Esophagus muscularis mucosa (tissue), 4 donors: ENCODE measurements at regions of chr4 and their contacts with region 1.

Region 1: DNA sequence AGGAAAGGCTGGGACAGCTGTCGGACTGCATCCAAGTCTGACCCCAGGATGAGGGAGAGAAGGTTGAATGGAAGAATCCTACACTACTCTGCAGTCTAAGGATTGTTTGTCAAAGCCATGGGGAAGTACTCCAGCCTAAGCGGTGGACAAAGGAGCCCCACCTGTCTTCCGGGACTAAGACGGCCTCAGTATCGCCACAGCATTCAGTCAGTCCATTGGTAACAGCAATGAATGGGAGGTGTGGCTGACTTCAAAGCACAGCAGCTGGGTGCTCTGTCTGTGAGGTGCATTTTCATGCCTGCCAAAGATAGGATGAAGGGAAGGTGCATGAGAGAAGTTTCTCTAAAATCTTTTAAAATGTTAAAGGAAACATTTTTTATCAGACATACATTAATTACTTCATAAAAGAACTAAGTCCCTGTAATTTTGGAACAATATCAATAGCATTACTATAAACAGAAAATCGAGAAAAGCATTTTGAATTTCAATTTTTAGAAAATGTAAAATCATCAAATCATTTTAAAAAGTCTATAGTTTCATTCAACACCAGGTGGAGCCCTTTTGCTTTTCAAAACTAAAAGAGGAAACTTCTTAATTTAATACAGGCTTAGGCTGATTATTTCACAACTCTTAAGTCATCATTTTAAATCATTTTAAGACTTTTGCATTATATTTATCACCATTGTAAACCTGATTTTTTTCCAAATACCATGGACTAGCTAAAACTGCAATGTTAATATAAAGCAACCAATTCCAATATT is 27.6 kb upstream of the INTU start:
- DNase-seq: no peak
- H3K4me3 ChIP-seq: no peak overlapping the region
- H3K27ac ChIP-seq: no peak overlapping the region
- H3K4me1 ChIP-seq: no peaks in the 10 kb centered on the region
- H3K27me3 ChIP-seq: peaks cover 0 to 5% (median 0%) of the 10 kb centered on the region in 4 donors
- CTCF ChIP-seq: peak; percentile 44 to 62 (median 61)
- EP300 ChIP-seq: no peak
- POLR2A ChIP-seq: no peak

Region 2: DNA sequence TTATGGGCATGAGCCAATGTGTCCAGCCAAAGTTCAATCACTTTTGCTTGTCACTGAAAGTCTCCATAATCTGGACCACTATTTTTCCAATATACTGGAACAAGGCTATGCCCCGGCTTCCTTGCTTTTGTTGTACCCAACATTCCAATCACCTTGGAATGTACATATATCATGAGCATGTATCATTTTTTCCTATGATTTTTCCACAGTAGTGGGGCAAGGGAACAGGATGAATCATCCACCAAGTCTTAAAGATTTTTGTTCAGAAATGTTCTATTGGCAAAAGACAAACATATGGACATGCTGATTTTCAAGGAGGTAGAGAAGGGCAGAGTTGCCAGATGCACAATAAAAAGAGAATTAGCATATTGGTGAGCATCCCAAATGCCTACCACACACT is 520.5 kb before region 1 on chr4:
- intact Hi-C with region 1: no loop called
- DNase-seq: no peak
- H3K4me3 ChIP-seq: no peak overlapping the region
- H3K27ac ChIP-seq: no peak overlapping the region
- H3K4me1 ChIP-seq: no peaks in the 10 kb centered on the region
- H3K27me3 ChIP-seq: no peaks in the 10 kb centered on the region
- CTCF ChIP-seq: no peak
- EP300 ChIP-seq: no peak
- POLR2A ChIP-seq: no peak

Region 3: DNA sequence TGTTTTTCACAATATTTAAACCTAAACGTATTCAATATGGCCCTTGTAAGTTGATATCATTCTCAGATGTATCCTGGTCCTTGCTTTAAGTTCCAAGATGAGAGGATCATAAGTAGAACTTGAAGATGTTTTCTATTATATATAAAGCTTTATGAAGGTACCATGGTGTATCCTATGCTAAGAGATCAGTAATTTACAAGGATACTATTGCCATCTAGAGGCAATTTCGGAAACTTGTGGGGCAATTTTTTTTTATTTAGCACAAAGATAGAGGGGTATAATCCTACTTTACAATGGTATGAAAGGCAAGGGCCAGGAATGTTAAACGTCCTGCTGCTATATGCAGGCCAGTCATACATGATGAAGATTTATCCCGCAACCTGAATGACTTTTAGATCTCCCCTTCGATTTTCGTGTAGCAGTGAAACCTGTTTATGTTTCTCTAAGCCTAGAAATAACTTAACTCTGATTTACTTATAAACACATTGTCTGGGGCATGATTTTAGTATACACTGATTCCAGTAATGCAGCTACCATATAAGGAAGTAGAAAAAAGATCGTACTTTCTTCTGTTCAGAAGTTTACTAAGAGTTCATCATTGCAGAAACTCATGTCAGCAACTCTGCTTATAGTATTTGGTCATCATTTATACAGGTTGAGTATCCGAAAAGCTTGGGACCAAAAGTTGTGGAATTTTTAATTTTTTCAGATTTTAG is 127.6 kb after region 1 on chr4:
- intact Hi-C with region 1: loop called (anchors 2 kb)
- DNase-seq: no peak
- H3K4me3 ChIP-seq: no peak overlapping the region
- H3K27ac ChIP-seq: no peak overlapping the region
- H3K4me1 ChIP-seq: no peaks in the 10 kb centered on the region
- H3K27me3 ChIP-seq: no peaks in the 10 kb centered on the region
- CTCF ChIP-seq: peak; percentile 57 to 65 (median 64)
- EP300 ChIP-seq: no peak
- POLR2A ChIP-seq: no peak

Region 4: DNA sequence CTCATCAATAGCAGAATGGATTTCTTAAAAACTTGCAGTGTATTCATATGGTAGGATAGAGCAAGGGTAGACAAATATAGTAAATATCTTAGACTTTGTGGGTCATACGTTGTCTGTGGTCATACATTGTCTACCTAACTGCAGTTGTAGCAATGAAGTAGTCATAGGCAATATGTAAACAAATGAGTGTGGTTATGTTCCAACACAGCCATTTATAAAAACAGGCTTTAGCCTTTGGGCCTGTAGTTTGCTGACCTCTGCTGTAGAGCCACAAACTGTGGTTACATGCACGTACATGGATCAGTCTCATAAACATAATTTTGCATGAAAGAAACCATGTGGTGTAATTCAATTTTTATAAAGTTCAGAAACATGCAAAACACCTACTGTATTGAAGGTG is 554.8 kb after region 1 on chr4:
- intact Hi-C with region 1: no loop called
- DNase-seq: no peak
- H3K4me3 ChIP-seq: no peak overlapping the region
- H3K27ac ChIP-seq: no peak overlapping the region
- H3K4me1 ChIP-seq: no peaks in the 10 kb centered on the region
- H3K27me3 ChIP-seq: no peaks in the 10 kb centered on the region
- CTCF ChIP-seq: no peak
- EP300 ChIP-seq: no peak
- POLR2A ChIP-seq: no peak